Aorta (tissue), 5 donors: ENCODE measurements at regions of chr18 and their contacts with region 1.

Region 1: GRCh38 chr18:58975296-58975695 is 110.6 kb downstream of the ZNF532 start:
- DNase-seq: peak in 1 of 2 donors; percentile 65
- ATAC-seq: peak; percentile 58
- H3K4me3 ChIP-seq: no peak overlapping the region
- H3K27ac ChIP-seq: peak overlapping the region; percentile 12 to 83
- H3K4me1 ChIP-seq: no peaks in the 10 kb centered on the region
- H3K27me3 ChIP-seq: no peaks in the 10 kb centered on the region

Region 2: DNA sequence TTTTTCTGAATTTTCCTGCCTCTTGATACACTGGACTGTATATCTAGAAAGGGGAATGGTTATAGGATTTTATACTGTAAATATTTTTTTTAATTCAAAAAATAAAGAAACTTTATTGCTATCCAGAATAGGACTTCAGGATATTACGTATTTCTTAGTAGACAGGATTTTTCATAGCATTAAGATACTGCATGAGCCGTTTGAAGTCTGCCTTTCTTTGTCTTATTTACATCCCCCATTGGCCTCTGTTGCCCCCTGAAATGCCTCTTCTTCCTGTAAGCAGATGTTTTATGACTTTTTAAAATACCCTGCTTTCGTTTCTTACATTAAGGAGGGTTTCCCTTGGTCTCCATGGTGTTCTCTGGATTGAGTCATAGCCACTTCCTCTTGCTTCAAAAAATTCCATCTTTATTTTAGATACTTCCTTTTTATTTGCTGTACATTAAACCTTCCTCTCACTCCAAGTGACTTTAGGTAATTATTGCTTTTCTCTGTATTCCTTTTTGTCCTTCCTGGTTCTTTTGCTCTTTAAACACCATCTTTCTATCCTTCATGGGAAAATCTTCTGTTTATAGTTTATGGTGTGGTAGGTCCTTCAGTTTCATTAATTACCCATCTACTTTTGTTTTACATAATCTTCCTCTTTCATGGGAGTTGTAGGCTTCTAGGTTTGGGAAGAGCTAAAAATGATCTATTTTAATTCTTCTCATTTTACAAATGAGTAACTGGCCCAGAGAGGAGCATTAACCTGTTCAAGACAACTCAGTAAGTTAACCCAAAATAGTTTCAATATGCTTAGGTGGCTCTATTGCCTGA is 38.0 kb before region 1 on chr18:
- intact Hi-C with region 1: loop called in 1 of 2 experiments (anchors 5 kb)
- DNase-seq: no peak
- ATAC-seq: no peak
- H3K4me3 ChIP-seq: no peak overlapping the region
- H3K27ac ChIP-seq: no peak overlapping the region
- H3K4me1 ChIP-seq: peaks cover 0 to 2% of the 10 kb centered on the region in 2 donors
- H3K27me3 ChIP-seq: no peaks in the 10 kb centered on the region

Region 3: GRCh38 chr18:59070181-59070912 is 95.1 kb after region 1 on chr18:
- intact Hi-C with region 1: no loop called
- DNase-seq: peak; percentile 91 to 96
- ATAC-seq: peak; percentile 82
- H3K4me3 ChIP-seq: no peak overlapping the region
- H3K27ac ChIP-seq: no peak overlapping the region
- H3K4me1 ChIP-seq: no peaks in the 10 kb centered on the region
- H3K27me3 ChIP-seq: no peaks in the 10 kb centered on the region

Region 4: GRCh38 chr18:59540780-59541179 is 565.5 kb after region 1 on chr18:
- intact Hi-C with region 1: no loop called
- DNase-seq: no peak
- ATAC-seq: no peak
- H3K4me3 ChIP-seq: no peak overlapping the region
- H3K27ac ChIP-seq: no peak overlapping the region
- H3K4me1 ChIP-seq: no peaks in the 10 kb centered on the region
- H3K27me3 ChIP-seq: no peaks in the 10 kb centered on the region